ENCODE measurements at regions of chr12 and their contacts with region 1.

Region 1: GRCh38 chr12:31406345-31406744 is 80.4 kb upstream of the SINHCAF start:
- DNase-seq: no peak
- ATAC-seq: no peak
- H3K4me3 ChIP-seq: no peak overlapping the region
- H3K27ac ChIP-seq: peak overlapping the region in 1 of 2 experiments; percentile 22; a peak in 4 of 6 replicates
- H3K4me1 ChIP-seq: peaks cover 3% of the 10 kb centered on the region; the same call in 2 of the 3 replicates
- CTCF ChIP-seq: no peak
- EP300 ChIP-seq: no peak
- POLR2A ChIP-seq: no peak
- RAD21 ChIP-seq: no peak

Region 2: GRCh38 chr12:31393004-31393550 is 13.3 kb before region 1 on chr12:
- CTCF ChIA-PET with region 1: interaction called, 16 read pairs
- POLR2A ChIA-PET with region 1: no interaction called
- DNase-seq: no peak
- ATAC-seq: no peak
- H3K4me3 ChIP-seq: no peak overlapping the region
- H3K27ac ChIP-seq: no peak overlapping the region
- H3K4me1 ChIP-seq: no peaks in the 10 kb centered on the region
- CTCF ChIP-seq: no peak
- EP300 ChIP-seq: no peak
- POLR2A ChIP-seq: no peak
- RAD21 ChIP-seq: no peak

Region 3: GRCh38 chr12:31431721-31432240 is 25.4 kb after region 1 on chr12:
- CTCF ChIA-PET with region 1: interaction called, 15 read pairs
- POLR2A ChIA-PET with region 1: no interaction called
- DNase-seq: no peak
- ATAC-seq: no peak
- H3K4me3 ChIP-seq: no peak overlapping the region
- H3K27ac ChIP-seq: no peak overlapping the region; a peak in 1 of 6 replicates
- H3K4me1 ChIP-seq: peaks cover 18% of the 10 kb centered on the region; the same call in 2 of the 3 replicates
- CTCF ChIP-seq: no peak
- EP300 ChIP-seq: no peak
- POLR2A ChIP-seq: no peak
- RAD21 ChIP-seq: no peak

Region 4: GRCh38 chr12:31518680-31519227 is 112.4 kb after region 1 on chr12:
- CTCF ChIA-PET with region 1: interaction called, 10 read pairs
- POLR2A ChIA-PET with region 1: no interaction called
- DNase-seq: peak; percentile 79 to 97
- ATAC-seq: peak; percentile 91 to 94
- H3K4me3 ChIP-seq: 0 out of 3 replicates have a peak overlapping the region, but pooled peaks have one; percentile 7
- H3K27ac ChIP-seq: peak overlapping the region; percentile 90 to 94
- H3K4me1 ChIP-seq: peaks cover 91% of the 10 kb centered on the region
- CTCF ChIP-seq: no peak
- EP300 ChIP-seq: peak; percentile 98 to 99
- POLR2A ChIP-seq: no peak
- RAD21 ChIP-seq: peak; percentile 49 to 71

Region 5: GRCh38 chr12:31620311-31620710 is 214.0 kb after region 1 on chr12:
- CTCF ChIA-PET with region 1: interaction called, 36 read pairs
- POLR2A ChIA-PET with region 1: no interaction called
- DNase-seq: peak; percentile 12 to 70
- ATAC-seq: peak; percentile 62 to 83; a peak in 4 of 6 replicates
- H3K4me3 ChIP-seq: no peak overlapping the region
- H3K27ac ChIP-seq: peak overlapping the region in 1 of 2 experiments; percentile 1; a peak in 1 of 6 replicates
- H3K4me1 ChIP-seq: peaks cover 17% of the 10 kb centered on the region
- CTCF ChIP-seq: no peak
- EP300 ChIP-seq: no peak
- POLR2A ChIP-seq: no peak
- RAD21 ChIP-seq: no peak

Region 6: GRCh38 chr12:31647086-31647491 is 240.7 kb after region 1 on chr12:
- CTCF ChIA-PET with region 1: interaction called, 119 read pairs
- POLR2A ChIA-PET with region 1: no interaction called
- DNase-seq: no peak
- ATAC-seq: no peak
- H3K4me3 ChIP-seq: no peak overlapping the region
- H3K27ac ChIP-seq: peak overlapping the region in 1 of 2 experiments; percentile 20; a peak in 1 of 6 replicates
- H3K4me1 ChIP-seq: peaks cover 23% of the 10 kb centered on the region; the same call in 2 of the 3 replicates
- CTCF ChIP-seq: no peak
- EP300 ChIP-seq: no peak
- POLR2A ChIP-seq: no peak
- RAD21 ChIP-seq: no peak

Measured in A549 (cell line).